Activated T-helper 2 cell treated with anti-CD3 and anti-CD28 coated beads, Interferon-gamma antibody, Interleukin-2, Interleukin-4, amounts not matched to agents 10 μg/mL and 5 μg/mL and 100 μg/mL, durations not matched to agents 14 hours and 24 hours and 36 hours (primary cell): ENCODE measurements at regions of chr13 and their contacts with region 1.

Region 1: GRCh38 chr13:91369441-91369831 is 21.9 kb downstream of the MIR17HG start:
- DNase-seq: no peak
- H3K4me3 Mint-ChIP-seq: no peak overlapping the region
- H3K27ac Mint-ChIP-seq: no peak overlapping the region
- H3K4me1 Mint-ChIP-seq: peaks cover 24% of the 10 kb centered on the region
- H3K27me3 Mint-ChIP-seq: peaks cover 6% of the 10 kb centered on the region

Region 2: DNA sequence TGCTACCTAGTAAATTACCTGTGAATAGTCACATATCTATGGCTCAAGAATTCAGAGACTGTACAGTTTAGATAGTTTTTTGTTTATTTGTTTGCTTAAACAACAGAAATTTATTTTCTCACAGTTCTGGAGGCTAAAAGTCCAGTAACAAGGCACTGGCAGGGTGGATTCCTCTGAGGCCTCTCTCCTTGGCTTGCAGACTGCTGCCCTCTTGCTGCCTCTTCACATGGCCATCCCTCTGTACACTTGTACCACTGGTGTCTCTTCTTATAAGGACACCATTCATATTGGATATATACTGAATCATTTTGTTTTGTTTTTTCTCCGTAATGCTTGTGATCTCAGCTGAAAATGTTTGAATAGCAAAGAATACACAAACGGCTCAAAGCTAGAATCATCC is 78.4 kb before region 1 on chr13:
- intact Hi-C with region 1: no loop called
- DNase-seq: no peak
- H3K4me3 Mint-ChIP-seq: no peak overlapping the region
- H3K27ac Mint-ChIP-seq: no peak overlapping the region
- H3K4me1 Mint-ChIP-seq: no peaks in the 10 kb centered on the region
- H3K27me3 Mint-ChIP-seq: peaks cover 2% of the 10 kb centered on the region

Region 3: GRCh38 chr13:91398413-91399272 is 29.2 kb after region 1 on chr13 and contains the start of gene GPC5:
- intact Hi-C with region 1: loop called (anchors 2 kb)
- DNase-seq: peak; percentile 75
- H3K4me3 Mint-ChIP-seq: peak within 1 kb of the TSS; percentile 71
- H3K27ac Mint-ChIP-seq: no peak within 1 kb of the TSS
- H3K4me1 Mint-ChIP-seq: peaks cover 6% of the 10 kb centered on the region
- H3K27me3 Mint-ChIP-seq: peaks cover 74% of the 10 kb centered on the region
- total RNA-seq, gene GPC5: 0.57 and 1.1 TPM in 2 replicates